PC-3 (cell line): ENCODE measurements at regions of chrX and their contacts with region 1.

Region 1: GRCh38 chrX:57929373-57929772 is 19.1 kb upstream of the ZXDA start:
- DNase-seq: peak; percentile 58
- ATAC-seq: peak; percentile 24; the same call in 1 of the 2 replicates
- H3K4me3 ChIP-seq: no peak overlapping the region
- H3K27ac ChIP-seq: no peak overlapping the region
- H3K4me1 ChIP-seq: no peaks in the 10 kb centered on the region
- H3K27me3 ChIP-seq: no peaks in the 10 kb centered on the region
- CTCF ChIP-seq: peak; percentile 66

Region 2: DNA sequence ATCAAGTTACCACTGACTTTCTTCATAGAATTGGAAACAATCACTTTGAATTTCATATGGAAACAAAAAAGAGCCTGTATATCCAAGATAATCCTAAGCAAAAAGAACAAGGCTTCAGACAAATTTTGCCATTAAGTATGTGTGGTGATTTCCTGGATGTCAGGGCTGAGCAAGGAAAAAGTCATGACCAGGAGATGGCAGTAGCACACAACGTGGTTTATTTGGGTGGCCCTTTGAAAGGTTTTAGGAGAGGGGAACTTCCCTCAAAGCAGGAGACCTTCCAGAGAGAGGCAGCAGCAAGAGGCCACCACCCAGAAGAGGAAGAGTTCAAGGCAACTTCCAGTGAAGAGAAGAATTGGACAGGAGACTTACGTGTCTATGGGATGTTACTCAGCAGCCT is 355.6 kb before region 1 on chrX:
- CTCF ChIA-PET with region 1: no interaction called
- POLR2A ChIA-PET with region 1: no interaction called
- intact Hi-C with region 1: loop called (anchors 5 kb)
- DNase-seq: peak; percentile 51
- ATAC-seq: peak; percentile 67; the same call in 1 of the 2 replicates
- H3K4me3 ChIP-seq: no peak overlapping the region
- H3K27ac ChIP-seq: no peak overlapping the region
- H3K4me1 ChIP-seq: no peaks in the 10 kb centered on the region
- H3K27me3 ChIP-seq: no peaks in the 10 kb centered on the region
- CTCF ChIP-seq: peak; percentile 71

Region 3: GRCh38 chrX:58025979-58026378 is 96.6 kb after region 1 on chrX:
- CTCF ChIA-PET with region 1: no interaction called
- POLR2A ChIA-PET with region 1: no interaction called
- intact Hi-C with region 1: loop called (anchors 2 kb)
- DNase-seq: peak; percentile 51
- ATAC-seq: peak; percentile 54; the same call in 1 of the 2 replicates
- H3K4me3 ChIP-seq: no peak overlapping the region
- H3K27ac ChIP-seq: no peak overlapping the region
- H3K4me1 ChIP-seq: no peaks in the 10 kb centered on the region
- H3K27me3 ChIP-seq: no peaks in the 10 kb centered on the region
- CTCF ChIP-seq: peak; percentile 72